Natural killer cell (primary cell): ENCODE measurements at regions of chr1 and their contacts with region 1.

Region 1: DNA sequence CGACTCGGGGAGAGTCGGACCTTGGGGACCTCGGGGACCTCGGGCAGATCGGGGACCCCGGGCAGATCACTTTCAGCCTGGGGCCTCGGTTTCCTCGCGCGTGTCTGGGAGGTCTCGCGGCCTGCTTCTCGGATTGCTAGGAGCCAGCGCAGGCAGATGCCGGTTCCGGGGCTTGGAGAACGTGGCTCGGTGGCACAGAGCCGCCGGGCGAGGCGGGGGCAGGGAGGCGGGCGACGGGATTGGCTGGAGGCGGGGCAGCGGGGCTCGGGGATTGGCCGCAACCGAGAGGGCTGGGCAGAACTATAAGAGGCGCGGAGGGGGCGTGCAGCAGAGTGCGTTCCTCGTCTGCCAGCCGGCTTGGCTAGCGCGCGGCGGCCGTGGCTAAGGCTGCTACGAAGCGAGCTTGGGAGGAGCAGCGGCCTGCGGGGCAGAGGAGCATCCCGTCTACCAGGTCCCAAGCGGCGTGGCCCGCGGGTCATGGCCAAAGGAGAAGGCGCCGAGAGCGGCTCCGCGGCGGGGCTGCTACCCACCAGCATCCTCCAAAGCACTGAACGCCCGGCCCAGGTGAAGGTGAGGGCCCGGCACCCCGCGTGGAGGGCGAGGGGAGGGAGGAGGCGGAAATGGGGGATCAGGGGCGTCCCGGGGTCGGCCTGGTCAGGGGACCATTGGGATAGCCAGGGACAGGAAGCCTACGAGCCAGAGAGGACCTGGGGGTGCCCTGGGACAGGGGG is at the start of gene MFSD2A:
- DNase-seq: peak; percentile 68 to 91
- ATAC-seq: peak; percentile 91 to 95 (median 94)
- H3K4me3 ChIP-seq: peak within 1 kb of the TSS; percentile 66
- H3K4me3 Mint-ChIP-seq: peak within 1 kb of the TSS; percentile 94
- H3K27ac ChIP-seq: no peak within 1 kb of the TSS
- H3K27ac Mint-ChIP-seq: peak within 1 kb of the TSS; percentile 14 to 80
- H3K4me1 ChIP-seq: peaks cover 24% of the 10 kb centered on the region
- H3K4me1 Mint-ChIP-seq: peaks cover 20 to 22% of the 10 kb centered on the region in 2 donors
- H3K27me3 ChIP-seq: no peaks in the 10 kb centered on the region
- H3K27me3 Mint-ChIP-seq: peaks cover 0 to 3% of the 10 kb centered on the region in 2 donors
- CTCF ChIP-seq: no peak
- total RNA-seq, gene MFSD2A: 2.8 to 4.4 (median 3.7) TPM

Region 2: GRCh38 chr1:39886757-39887231 is 68.2 kb before region 1 on chr1:
- intact Hi-C with region 1: loop called (anchors 1 kb)
- DNase-seq: no peak
- ATAC-seq: no peak
- H3K4me3 ChIP-seq: no peak overlapping the region
- H3K4me3 Mint-ChIP-seq: no peak overlapping the region
- H3K27ac ChIP-seq: no peak overlapping the region
- H3K27ac Mint-ChIP-seq: no peak overlapping the region
- H3K4me1 ChIP-seq: peaks cover 13% of the 10 kb centered on the region
- H3K4me1 Mint-ChIP-seq: peaks cover 16% of the 10 kb centered on the region in 2 donors
- H3K27me3 ChIP-seq: no peaks in the 10 kb centered on the region
- H3K27me3 Mint-ChIP-seq: peaks cover 5 to 7% of the 10 kb centered on the region in 2 donors
- CTCF ChIP-seq: no peak